ENCODE measurements at regions of chr20 and their contacts with region 1.

Region 1: DNA sequence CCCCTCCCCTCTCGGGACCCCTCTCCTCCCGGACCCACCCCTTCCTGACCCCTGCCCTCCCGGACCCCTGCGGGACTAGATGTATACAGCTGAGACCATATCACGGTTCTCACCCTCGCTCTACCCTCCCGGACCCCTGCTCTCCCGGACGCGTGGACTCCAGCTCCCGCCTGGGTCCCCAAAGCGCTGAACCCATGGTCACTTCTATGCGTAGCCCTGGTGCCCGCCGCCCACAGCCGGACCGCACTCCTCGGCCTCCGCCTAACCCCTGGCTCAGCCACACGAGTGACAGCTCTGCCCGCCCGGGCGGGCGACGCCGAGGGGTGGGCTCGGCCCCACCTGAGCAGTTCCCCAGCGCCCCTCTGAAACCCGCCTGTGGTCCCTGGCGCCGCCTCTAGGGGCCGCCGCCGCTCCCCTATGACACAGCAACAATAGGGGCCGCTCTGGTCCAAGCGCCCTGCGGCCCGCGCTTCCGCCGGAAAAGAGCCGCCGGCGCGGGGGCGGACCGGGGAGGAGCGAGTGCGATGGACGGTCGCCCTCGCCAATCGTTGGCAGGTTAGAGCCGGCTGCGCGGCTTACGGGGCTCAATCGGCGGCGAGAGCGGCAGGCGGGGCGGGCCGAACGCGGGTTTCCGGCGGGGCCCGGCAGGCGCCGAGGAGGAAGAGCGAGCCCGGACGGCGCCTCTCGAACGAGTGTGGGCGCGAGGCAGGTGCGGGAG is at the start of gene ADRM1:
- DNase-seq: peak; percentile 91 to 99 (median 96)
- ATAC-seq: peak; percentile 94
- H3K4me3 ChIP-seq: peak within 1 kb of the TSS; percentile 94
- H3K4me3 Mint-ChIP-seq: peak within 1 kb of the TSS; percentile 89 to 98 (median 96)
- H3K27ac ChIP-seq: peak within 1 kb of the TSS; percentile 85
- H3K27ac Mint-ChIP-seq: peak within 1 kb of the TSS; percentile 90 to 100 (median 96)
- H3K4me1 ChIP-seq: peaks cover 17 to 19% of the 10 kb centered on the region in 2 donors
- H3K4me1 Mint-ChIP-seq: peaks cover 17 to 32% (median 22%) of the 10 kb centered on the region in 7 donors
- H3K27me3 ChIP-seq: no peaks in the 10 kb centered on the region
- H3K27me3 Mint-ChIP-seq: no peaks in the 10 kb centered on the region
- total RNA-seq, gene ADRM1: 51.3 to 117 (median 55.0) TPM

Region 2: DNA sequence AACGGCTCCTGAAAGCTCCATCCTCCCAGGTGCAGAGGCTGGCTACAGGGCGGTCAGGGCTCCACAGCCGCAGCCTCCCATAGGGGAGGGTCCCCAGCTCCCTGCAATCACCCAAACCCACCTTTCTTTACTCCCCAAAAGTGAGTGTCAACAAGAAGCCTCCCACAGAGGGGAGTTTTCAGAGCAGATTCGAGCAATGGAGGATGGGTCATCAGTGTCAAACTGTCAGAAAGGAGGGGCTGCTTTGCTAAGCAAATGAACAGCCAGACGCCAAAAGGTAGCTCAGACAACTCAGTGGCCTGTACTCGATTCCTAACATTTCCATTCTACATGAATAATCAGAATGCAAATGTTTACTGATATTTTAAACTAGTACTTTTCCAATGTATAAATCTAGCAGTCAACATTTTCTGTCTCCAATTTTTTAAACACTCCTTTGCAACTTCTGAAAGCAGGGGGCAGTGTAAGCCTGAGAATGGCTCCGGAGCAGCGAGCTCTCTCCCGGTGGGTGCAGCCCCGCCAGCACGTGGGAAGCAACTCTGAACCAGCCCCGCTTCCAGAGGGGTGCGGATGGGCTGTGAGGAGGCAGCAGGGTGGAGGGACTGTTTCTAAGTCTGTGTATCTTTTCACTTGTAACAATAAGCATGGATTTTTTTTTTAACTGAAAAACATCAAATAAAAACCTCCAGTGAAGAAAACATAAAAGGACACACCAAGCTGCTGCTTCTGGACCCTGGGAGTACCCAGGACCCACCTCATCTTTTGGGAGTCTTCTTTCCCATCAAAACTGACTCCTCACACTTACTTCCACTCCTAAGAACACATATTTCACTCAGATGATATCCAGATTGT is 291.7 kb before region 1 on chr20:
- CTCF ChIA-PET with region 1: no interaction called
- POLR2A ChIA-PET with region 1: interaction called, 3 read pairs
- intact Hi-C with region 1: loop called in 1 of 2 experiments (anchors 1 kb)
- DNase-seq: peak; percentile 36 to 70 (median 66)
- ATAC-seq: peak; percentile 81
- H3K4me3 ChIP-seq: no peak overlapping the region
- H3K4me3 Mint-ChIP-seq: peak overlapping the region in 1 of 10 donors; percentile 6
- H3K27ac ChIP-seq: no peak overlapping the region
- H3K27ac Mint-ChIP-seq: peak overlapping the region in 6 of 9 donors; percentile 6 to 65 (median 43)
- H3K4me1 ChIP-seq: peaks cover 0 to 4% of the 10 kb centered on the region in 2 donors
- H3K4me1 Mint-ChIP-seq: peaks cover 6 to 24% (median 10%) of the 10 kb centered on the region in 7 donors
- H3K27me3 ChIP-seq: no peaks in the 10 kb centered on the region
- H3K27me3 Mint-ChIP-seq: no peaks in the 10 kb centered on the region

Region 3: GRCh38 chr20:62121776-62122631 is 180.5 kb before region 1 on chr20 and contains the start of gene LSM14B:
- CTCF ChIA-PET with region 1: interaction called, 4 read pairs
- POLR2A ChIA-PET with region 1: interaction called, 3 read pairs
- intact Hi-C with region 1: loop called (anchors 1 kb)
- DNase-seq: peak; percentile 94 to 99 (median 96)
- ATAC-seq: peak; percentile 91
- H3K4me3 ChIP-seq: peak within 1 kb of the TSS; percentile 77
- H3K4me3 Mint-ChIP-seq: peak within 1 kb of the TSS; percentile 86 to 96 (median 92)
- H3K27ac ChIP-seq: peak within 1 kb of the TSS; percentile 81
- H3K27ac Mint-ChIP-seq: peak within 1 kb of the TSS; percentile 84 to 97 (median 95)
- H3K4me1 ChIP-seq: peaks cover 33 to 39% of the 10 kb centered on the region in 2 donors
- H3K4me1 Mint-ChIP-seq: peaks cover 42 to 71% (median 59%) of the 10 kb centered on the region in 7 donors
- H3K27me3 ChIP-seq: no peaks in the 10 kb centered on the region
- H3K27me3 Mint-ChIP-seq: no peaks in the 10 kb centered on the region
- total RNA-seq, gene LSM14B: 39.5 to 61.5 (median 41.9) TPM

Region 4: GRCh38 chr20:62237801-62238571 is 64.5 kb before region 1 on chr20 and contains the start of gene OSBPL2:
- CTCF ChIA-PET with region 1: no interaction called
- POLR2A ChIA-PET with region 1: interaction called, 4 read pairs
- intact Hi-C with region 1: loop called (anchors 1 kb)
- DNase-seq: peak; percentile 99 to 100 (median 100)
- ATAC-seq: peak; percentile 99
- H3K4me3 ChIP-seq: peak within 1 kb of the TSS; percentile 48
- H3K4me3 Mint-ChIP-seq: peak within 1 kb of the TSS; percentile 82 to 90 (median 87)
- H3K27ac ChIP-seq: peak within 1 kb of the TSS; percentile 79
- H3K27ac Mint-ChIP-seq: peak within 1 kb of the TSS; percentile 85 to 97 (median 94)
- H3K4me1 ChIP-seq: peaks cover 10 to 22% of the 10 kb centered on the region in 2 donors
- H3K4me1 Mint-ChIP-seq: peaks cover 27 to 47% (median 39%) of the 10 kb centered on the region in 7 donors
- H3K27me3 ChIP-seq: no peaks in the 10 kb centered on the region
- H3K27me3 Mint-ChIP-seq: peaks cover 0 to 5% (median 4%) of the 10 kb centered on the region in 5 donors
- total RNA-seq, gene OSBPL2: 37.6 to 80.8 (median 69.3) TPM

Region 5: DNA sequence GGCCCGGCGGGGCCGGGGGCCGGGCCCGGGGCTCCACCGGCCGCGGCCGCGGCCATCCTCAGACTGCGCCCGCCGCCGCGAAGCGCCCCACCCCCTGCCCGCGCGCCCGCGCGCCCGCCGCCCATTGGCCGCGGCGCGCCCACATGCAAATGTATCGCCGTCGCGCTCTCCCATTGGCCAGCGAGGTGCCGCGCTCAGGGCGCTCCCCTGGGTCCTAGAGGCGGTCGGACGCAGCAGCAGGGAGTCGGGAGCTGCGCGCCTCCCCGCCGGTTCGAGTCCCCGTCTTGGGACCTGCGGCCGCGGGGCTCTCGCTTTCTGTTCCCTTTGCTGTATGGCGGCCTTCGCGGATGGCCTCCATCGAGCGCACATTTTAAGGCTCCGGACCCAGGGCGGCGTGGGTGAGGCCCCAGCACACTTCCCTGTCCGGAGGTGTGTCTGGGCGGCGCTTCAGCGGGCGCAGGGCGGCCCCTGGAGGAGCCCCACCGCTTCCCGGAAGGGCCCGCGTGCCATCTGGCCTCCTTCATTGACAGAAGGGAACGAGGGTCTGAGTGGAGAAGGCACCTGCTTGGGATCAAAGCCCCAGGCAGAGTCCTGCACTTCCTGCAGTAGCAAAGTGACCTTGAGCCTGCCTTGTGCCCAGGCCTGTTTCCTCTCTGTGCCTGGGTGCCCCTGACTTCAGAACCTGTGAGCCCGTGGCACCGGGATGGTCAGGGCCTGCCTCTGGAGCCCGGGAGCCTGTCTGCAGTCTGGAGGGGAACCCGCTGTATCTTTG is 104.9 kb after region 1 on chr20 and contains the start of gene CABLES2:
- CTCF ChIA-PET with region 1: no interaction called
- POLR2A ChIA-PET with region 1: no interaction called
- intact Hi-C with region 1: loop called (anchors 1 kb)
- DNase-seq: peak; percentile 86 to 94 (median 91)
- ATAC-seq: peak; percentile 98
- H3K4me3 ChIP-seq: peak within 1 kb of the TSS; percentile 74
- H3K4me3 Mint-ChIP-seq: peak within 1 kb of the TSS; percentile 68 to 90 (median 82)
- H3K27ac ChIP-seq: peak within 1 kb of the TSS; percentile 76
- H3K27ac Mint-ChIP-seq: peak within 1 kb of the TSS in 8 of 9 donors; percentile 52 to 88 (median 68)
- H3K4me1 ChIP-seq: peaks cover 17 to 23% of the 10 kb centered on the region in 2 donors
- H3K4me1 Mint-ChIP-seq: peaks cover 19 to 31% (median 26%) of the 10 kb centered on the region in 7 donors
- H3K27me3 ChIP-seq: no peaks in the 10 kb centered on the region
- H3K27me3 Mint-ChIP-seq: peaks cover 0 to 3% (median 0%) of the 10 kb centered on the region in 5 donors
- total RNA-seq, gene CABLES2: 4.3 to 16.7 (median 6.3) TPM

Region 6: DNA sequence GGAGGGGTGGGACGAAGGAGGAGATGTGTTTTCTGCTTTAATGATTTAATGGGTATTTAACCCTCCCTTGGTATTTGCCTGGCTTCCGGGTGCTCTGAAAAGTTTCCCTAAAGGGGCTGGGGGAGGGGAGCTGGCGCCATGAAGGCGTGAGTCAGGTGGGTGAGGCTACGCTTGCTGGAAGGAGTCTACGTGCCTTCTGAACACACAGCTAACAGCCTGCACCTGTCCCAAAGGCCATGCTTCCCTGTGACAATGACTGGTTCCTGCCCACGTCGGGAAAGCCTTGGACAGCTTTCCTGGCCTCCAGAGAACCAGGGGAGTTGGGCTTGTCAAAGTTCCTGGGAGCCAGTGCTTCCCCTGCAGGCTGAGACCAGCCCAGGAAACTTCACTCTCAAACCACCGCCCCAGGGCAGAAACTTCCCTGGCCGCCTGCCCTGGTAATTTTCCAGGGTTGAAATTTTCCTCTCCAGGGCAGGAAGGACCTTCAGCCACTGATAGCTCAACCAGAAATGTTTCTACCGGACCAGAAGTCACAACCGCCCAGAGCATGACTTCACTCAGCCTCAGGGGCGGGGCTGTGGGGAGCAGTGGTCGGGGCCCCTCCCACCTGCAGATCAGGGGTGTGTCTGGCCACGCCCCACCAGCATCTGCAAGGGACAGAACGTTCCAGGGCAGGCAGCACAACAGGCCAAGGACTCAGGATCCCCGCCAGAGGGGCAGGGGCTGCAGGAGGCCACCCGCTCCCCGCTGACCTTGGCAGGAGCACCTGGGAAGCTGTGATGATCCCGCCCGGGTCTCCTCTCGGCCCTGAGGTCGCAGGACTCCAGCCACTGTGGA is 321.2 kb after region 1 on chr20:
- CTCF ChIA-PET with region 1: no interaction called
- POLR2A ChIA-PET with region 1: no interaction called
- intact Hi-C with region 1: loop called (anchors 2 to 5 kb)
- DNase-seq: peak; percentile 31 to 85 (median 58)
- ATAC-seq: peak; percentile 96
- H3K4me3 ChIP-seq: peak overlapping the region; percentile 39
- H3K4me3 Mint-ChIP-seq: peak overlapping the region; percentile 41 to 85 (median 75)
- H3K27ac ChIP-seq: no peak overlapping the region
- H3K27ac Mint-ChIP-seq: peak overlapping the region; percentile 28 to 98 (median 72)
- H3K4me1 ChIP-seq: peaks cover 12 to 21% of the 10 kb centered on the region in 2 donors
- H3K4me1 Mint-ChIP-seq: peaks cover 11 to 38% (median 13%) of the 10 kb centered on the region in 7 donors
- H3K27me3 ChIP-seq: no peaks in the 10 kb centered on the region
- H3K27me3 Mint-ChIP-seq: no peaks in the 10 kb centered on the region

Region 7: GRCh38 chr20:62937366-62938104 is 635.0 kb after region 1 on chr20:
- CTCF ChIA-PET with region 1: no interaction called
- POLR2A ChIA-PET with region 1: no interaction called
- intact Hi-C with region 1: loop called in 1 of 2 experiments (anchors 5 kb)
- DNase-seq: peak; percentile 96 to 98 (median 97)
- ATAC-seq: peak; percentile 95
- H3K4me3 ChIP-seq: peak overlapping the region; percentile 94
- H3K4me3 Mint-ChIP-seq: peak overlapping the region in 6 of 10 donors; percentile 94 to 98 (median 96)
- H3K27ac ChIP-seq: peak overlapping the region; percentile 97
- H3K27ac Mint-ChIP-seq: peak overlapping the region; percentile 88 to 98 (median 95)
- H3K4me1 ChIP-seq: peaks cover 34 to 37% of the 10 kb centered on the region in 2 donors
- H3K4me1 Mint-ChIP-seq: peaks cover 26 to 51% (median 40%) of the 10 kb centered on the region in 7 donors
- H3K27me3 ChIP-seq: no peaks in the 10 kb centered on the region
- H3K27me3 Mint-ChIP-seq: no peaks in the 10 kb centered on the region

Measured in naive thymus-derived CD4-positive, alpha-beta T cell (primary cell).